PC-9 (cell line): ENCODE measurements at regions of chr2 and their contacts with region 1.

Region 1: DNA sequence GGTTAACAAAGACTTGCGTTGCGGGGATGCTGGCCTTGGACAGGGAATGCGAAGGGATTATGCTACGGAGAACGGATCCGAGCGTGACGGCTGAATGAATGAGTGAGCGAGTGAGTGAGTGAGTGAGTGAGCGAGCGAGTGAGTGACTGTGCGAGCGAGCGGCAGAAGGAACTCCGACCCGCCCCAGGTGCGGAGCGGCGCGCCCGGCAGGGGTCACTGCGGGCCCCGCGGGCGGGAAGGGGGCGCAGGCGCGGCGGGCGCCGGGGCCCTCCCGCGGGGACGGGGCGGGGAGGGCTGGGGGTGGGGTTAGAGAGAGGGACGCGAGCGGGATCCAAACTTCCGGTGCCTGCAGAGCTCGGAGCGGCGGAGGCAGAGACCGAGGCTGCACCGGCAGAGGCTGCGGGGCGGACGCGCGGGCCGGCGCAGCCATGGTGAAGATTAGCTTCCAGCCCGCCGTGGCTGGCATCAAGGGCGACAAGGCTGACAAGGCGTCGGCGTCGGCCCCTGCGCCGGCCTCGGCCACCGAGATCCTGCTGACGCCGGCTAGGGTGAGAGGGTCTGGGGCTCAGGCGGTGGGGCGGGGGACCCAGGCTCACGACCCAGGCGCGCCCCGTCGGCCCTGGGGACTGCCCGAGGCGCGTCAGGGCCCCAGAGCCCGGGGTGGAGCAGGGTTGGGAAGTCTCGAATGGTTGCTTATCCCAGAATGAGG is at the start of gene ITM2C:
- DNase-seq: peak in 1 of 2 experiments; percentile 78
- H3K4me3 ChIP-seq: peak within 1 kb of the TSS; percentile 84
- H3K27ac ChIP-seq: no peak within 1 kb of the TSS
- H3K4me1 ChIP-seq: no peaks in the 10 kb centered on the region; the same call in 1 of the 2 replicates
- H3K27me3 ChIP-seq: peaks cover 13% of the 10 kb centered on the region; the same call in 1 of the 2 replicates
- CTCF ChIP-seq: no peak
- total RNA-seq, gene ITM2C: 76.0 and 96.4 TPM in 2 replicates

Region 2: DNA sequence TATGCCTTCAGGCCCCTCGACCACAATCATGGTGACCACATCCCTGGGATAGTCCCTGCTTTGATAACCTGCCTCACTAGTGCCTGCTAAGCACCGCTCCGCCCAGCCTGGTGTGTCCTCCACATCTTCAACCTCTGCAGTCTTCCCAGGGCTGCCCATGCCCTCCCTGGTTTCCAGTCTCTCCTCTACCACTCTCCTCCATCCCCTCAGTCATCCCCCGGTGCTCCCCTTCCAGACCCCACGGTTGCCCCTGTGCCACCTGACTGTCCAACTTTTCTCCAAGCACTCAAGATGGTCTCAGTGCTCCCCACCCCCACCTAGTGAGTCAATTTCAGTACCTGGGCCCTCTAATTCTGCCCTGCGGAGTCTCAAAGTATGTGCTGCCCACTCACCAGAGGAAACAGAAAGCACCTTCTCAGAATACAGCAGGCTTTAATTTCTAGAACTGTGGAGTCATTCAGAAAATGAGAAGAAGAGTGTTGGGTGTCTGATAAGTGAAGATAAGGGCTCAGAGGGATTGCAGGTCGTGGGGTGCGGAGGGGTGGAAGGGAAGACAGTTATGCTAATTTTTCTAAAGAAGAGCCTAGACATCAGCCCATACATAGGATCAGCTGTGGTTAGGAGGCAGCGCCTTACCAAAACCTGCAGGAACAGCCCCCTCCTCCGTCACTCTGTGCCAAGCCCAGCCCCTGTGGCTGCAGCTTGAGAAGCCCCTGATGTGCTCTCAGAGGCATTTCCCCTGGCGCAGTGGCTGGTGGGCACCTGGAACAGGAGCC is 205.7 kb before region 1 on chr2:
- CTCF ChIA-PET with region 1: no interaction called
- POLR2A ChIA-PET with region 1: interaction called, 29 read pairs
- intact Hi-C with region 1: no loop called
- DNase-seq: no peak
- H3K4me3 ChIP-seq: no peak overlapping the region
- H3K27ac ChIP-seq: no peak overlapping the region
- H3K4me1 ChIP-seq: peaks cover 5% of the 10 kb centered on the region; the same call in 1 of the 2 replicates
- H3K27me3 ChIP-seq: no peaks in the 10 kb centered on the region
- CTCF ChIP-seq: no peak